Heart right ventricle (tissue), 16 donors: ENCODE measurements at regions of chr2 and their contacts with region 1.

Region 1: GRCh38 chr2:30612371-30612770 is 165.3 kb downstream of the LCLAT1 start:
- DNase-seq: no peak
- ATAC-seq: peak in 6 of 8 donors; percentile 39 to 59 (median 56)
- H3K4me3 ChIP-seq: no peak overlapping the region
- H3K27ac ChIP-seq: peak overlapping the region in 6 of 10 donors; percentile 9 to 69 (median 21)
- H3K4me1 ChIP-seq: peaks cover 2 to 36% (median 25%) of the 10 kb centered on the region in 9 donors
- H3K27me3 ChIP-seq: no peaks in the 10 kb centered on the region
- CTCF ChIP-seq: no peak

Region 2: DNA sequence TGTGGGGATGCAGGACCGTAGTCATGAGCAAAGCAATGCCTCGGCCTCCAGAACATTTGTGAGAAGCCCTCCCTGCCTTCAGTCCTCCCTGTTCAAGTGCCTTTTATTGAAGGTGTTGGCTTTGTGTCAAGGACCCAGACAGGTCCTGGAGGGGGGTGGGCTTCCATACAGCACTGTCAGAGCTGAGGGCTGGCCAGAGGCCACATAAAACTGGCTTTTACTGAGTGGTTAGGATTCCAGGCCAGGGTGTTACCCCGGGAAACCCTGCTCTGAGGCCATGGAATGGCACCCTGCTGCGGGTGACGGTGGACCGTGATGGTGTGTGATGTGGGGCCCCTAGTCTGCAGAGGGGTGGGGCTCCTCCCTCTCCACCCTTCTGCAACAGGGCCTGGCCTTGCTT is 1589.7 kb before region 1 on chr2:
- intact Hi-C with region 1: no loop called
- DNase-seq: no peak
- ATAC-seq: no peak
- H3K4me3 ChIP-seq: no peak overlapping the region
- H3K27ac ChIP-seq: no peak overlapping the region
- H3K4me1 ChIP-seq: peaks cover 0 to 9% (median 1%) of the 10 kb centered on the region in 9 donors
- H3K27me3 ChIP-seq: no peaks in the 10 kb centered on the region
- CTCF ChIP-seq: no peak

Region 3: DNA sequence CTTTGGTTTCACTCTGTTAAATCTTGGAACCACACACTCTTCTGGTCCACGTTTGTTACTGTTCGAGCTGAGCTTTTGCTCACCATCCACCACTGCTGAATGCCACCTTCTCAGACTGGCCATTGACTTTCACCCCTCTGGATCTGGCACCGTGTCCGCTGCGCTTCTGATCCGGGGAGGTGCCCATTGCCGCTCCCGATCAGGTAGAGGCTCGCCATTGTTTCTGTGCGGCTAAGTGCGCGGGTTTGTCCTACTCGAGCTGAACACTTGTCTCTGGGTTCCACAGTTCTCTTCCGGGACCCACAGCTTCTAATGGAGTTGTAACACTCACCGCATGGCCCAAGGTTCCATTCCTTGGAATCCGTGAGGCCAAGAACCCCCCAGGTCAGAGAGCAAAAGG is 92.6 kb before region 1 on chr2:
- intact Hi-C with region 1: loop called in 1 of 10 experiments (anchors 2 kb)
- DNase-seq: no peak
- ATAC-seq: no peak
- H3K4me3 ChIP-seq: no peak overlapping the region
- H3K27ac ChIP-seq: no peak overlapping the region
- H3K4me1 ChIP-seq: peaks cover 0 to 10% (median 3%) of the 10 kb centered on the region in 9 donors
- H3K27me3 ChIP-seq: no peaks in the 10 kb centered on the region
- CTCF ChIP-seq: no peak

Region 4: GRCh38 chr2:30584116-30584515 is 28.3 kb before region 1 on chr2:
- intact Hi-C with region 1: loop called in 1 of 10 experiments (anchors 5 kb)
- DNase-seq: no peak
- ATAC-seq: peak in 6 of 8 donors; percentile 42 to 80 (median 75)
- H3K4me3 ChIP-seq: no peak overlapping the region
- H3K27ac ChIP-seq: peak overlapping the region in 9 of 10 donors; percentile 16 to 84 (median 72)
- H3K4me1 ChIP-seq: peaks cover 0 to 58% (median 22%) of the 10 kb centered on the region in 9 donors
- H3K27me3 ChIP-seq: no peaks in the 10 kb centered on the region
- CTCF ChIP-seq: no peak